ENCODE measurements at regions of chr20 and their contacts with region 1.

Region 1: GRCh38 chr20:38962044-38962927 is at the start of gene DHX35:
- DNase-seq: peak; percentile 95
- H3K4me3 Mint-ChIP-seq: peak within 1 kb of the TSS; percentile 93
- H3K27ac Mint-ChIP-seq: peak within 1 kb of the TSS; percentile 93
- H3K4me1 Mint-ChIP-seq: peaks cover 19% of the 10 kb centered on the region
- H3K27me3 Mint-ChIP-seq: no peaks in the 10 kb centered on the region
- CTCF ChIP-seq: no peak
- total RNA-seq, gene DHX35: 7.8 and 8.3 TPM in 2 replicates

Region 2: GRCh38 chr20:37243076-37243936 is 1719.0 kb before region 1 on chr20:
- CTCF ChIA-PET with region 1: no interaction called
- POLR2A ChIA-PET with region 1: no interaction called
- intact Hi-C with region 1: no loop called
- DNase-seq: no peak
- H3K4me3 Mint-ChIP-seq: no peak overlapping the region
- H3K27ac Mint-ChIP-seq: peak overlapping the region; percentile 52
- H3K4me1 Mint-ChIP-seq: no peaks in the 10 kb centered on the region
- H3K27me3 Mint-ChIP-seq: no peaks in the 10 kb centered on the region
- CTCF ChIP-seq: no peak

Region 3: DNA sequence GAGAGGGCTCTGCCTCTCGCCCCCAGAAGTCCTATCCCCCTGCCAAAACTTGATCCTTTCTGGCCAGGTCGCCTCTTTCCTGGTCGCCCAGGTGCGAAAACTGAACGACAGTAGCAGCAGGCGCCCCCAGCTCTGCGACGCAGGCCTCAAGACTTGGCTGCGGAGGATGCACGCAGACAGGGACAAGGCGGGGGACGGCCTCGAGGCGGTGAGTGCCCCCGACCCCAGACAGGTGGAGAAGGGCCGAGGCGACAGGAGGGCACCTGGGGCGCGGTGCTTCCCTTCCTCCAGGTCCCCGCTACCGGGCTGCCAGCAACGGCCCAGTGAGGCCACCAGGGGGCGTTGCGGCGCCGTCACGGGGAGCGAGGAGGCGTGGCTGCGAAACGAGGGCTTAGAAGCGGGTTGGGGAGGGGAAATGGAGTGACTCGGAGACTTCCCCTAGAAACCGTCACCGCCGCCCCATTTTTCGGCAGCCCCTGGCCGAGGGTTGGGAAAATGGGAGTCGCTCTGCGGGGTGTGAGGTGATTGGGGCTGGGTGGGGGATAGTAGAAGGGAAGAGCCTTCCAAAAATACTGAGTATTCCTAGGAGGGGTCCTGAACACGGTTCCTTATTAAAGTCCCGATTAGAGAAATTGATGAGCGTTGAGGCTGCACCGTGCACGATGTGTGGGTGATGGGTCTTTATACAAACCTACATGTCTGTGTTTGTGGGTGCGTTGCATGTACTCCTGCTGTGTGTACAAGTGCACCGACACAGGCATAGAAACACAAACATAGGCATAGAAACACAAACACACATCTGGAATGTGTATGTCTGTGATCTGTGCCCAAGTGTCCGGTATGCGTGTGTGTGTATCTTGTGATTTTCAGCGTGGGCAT is 316.1 kb before region 1 on chr20:
- CTCF ChIA-PET with region 1: interaction called, 13 read pairs
- POLR2A ChIA-PET with region 1: no interaction called
- intact Hi-C with region 1: no loop called
- DNase-seq: peak; percentile 74
- H3K4me3 Mint-ChIP-seq: peak overlapping the region; percentile 60
- H3K27ac Mint-ChIP-seq: no peak overlapping the region
- H3K4me1 Mint-ChIP-seq: peaks cover 9% of the 10 kb centered on the region
- H3K27me3 Mint-ChIP-seq: peaks cover 42% of the 10 kb centered on the region
- CTCF ChIP-seq: peak; percentile 96

Region 4: GRCh38 chr20:38805502-38805957 is 156.8 kb before region 1 on chr20 and contains the start of gene PPP1R16B:
- CTCF ChIA-PET with region 1: no interaction called
- POLR2A ChIA-PET with region 1: no interaction called
- intact Hi-C with region 1: no loop called
- DNase-seq: no peak
- H3K4me3 Mint-ChIP-seq: no peak within 1 kb of the TSS
- H3K27ac Mint-ChIP-seq: no peak within 1 kb of the TSS
- H3K4me1 Mint-ChIP-seq: no peaks in the 10 kb centered on the region
- H3K27me3 Mint-ChIP-seq: peaks cover 24% of the 10 kb centered on the region
- CTCF ChIP-seq: no peak
- total RNA-seq, gene PPP1R16B: not detected in 2 replicates

Region 5: DNA sequence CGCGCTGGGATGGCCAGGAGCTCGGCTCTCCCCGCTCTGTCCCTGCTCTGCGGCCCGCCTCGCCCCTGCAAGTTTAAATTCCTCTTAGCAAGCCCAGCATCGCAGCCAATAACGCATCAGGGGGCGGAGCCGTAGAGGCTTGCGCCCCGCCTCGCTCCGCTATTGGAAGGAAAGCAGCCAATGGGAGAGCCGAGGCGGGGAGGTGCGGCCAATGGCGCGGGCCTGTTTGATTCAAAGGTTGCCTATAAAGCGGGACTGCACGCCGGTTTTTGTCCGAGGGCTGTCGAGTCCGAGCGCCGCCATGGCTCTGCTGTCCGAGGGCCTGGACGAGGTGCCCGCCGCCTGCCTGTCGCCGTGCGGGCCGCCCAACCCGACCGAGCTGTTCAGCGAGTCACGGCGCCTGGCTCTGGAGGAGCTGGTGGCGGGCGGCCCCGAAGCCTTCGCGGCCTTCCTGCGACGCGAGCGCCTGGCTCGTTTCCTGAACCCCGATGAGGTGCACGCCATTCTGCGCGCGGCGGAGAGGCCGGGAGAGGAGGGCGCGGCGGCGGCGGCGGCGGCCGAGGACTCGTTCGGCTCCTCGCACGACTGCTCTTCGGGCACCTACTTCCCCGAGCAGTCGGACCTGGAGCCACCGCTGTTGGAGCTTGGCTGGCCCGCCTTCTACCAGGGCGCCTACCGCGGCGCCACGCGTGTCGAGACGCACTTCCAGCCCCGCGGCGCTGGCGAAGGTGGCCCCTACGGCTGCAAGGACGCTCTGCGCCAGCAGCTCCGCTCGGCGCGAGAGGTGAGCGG is 35.9 kb before region 1 on chr20 and contains the start of gene FAM83D:
- CTCF ChIA-PET with region 1: interaction called, 68 read pairs
- POLR2A ChIA-PET with region 1: interaction called, 88 read pairs
- intact Hi-C with region 1: loop called (anchors 2 kb)
- DNase-seq: peak; percentile 98
- H3K4me3 Mint-ChIP-seq: peak within 1 kb of the TSS; percentile 77
- H3K27ac Mint-ChIP-seq: no peak within 1 kb of the TSS
- H3K4me1 Mint-ChIP-seq: peaks cover 19% of the 10 kb centered on the region
- H3K27me3 Mint-ChIP-seq: no peaks in the 10 kb centered on the region
- CTCF ChIP-seq: peak; percentile 56
- total RNA-seq, gene FAM83D: 10.7 and 18.4 TPM in 2 replicates

Region 6: DNA sequence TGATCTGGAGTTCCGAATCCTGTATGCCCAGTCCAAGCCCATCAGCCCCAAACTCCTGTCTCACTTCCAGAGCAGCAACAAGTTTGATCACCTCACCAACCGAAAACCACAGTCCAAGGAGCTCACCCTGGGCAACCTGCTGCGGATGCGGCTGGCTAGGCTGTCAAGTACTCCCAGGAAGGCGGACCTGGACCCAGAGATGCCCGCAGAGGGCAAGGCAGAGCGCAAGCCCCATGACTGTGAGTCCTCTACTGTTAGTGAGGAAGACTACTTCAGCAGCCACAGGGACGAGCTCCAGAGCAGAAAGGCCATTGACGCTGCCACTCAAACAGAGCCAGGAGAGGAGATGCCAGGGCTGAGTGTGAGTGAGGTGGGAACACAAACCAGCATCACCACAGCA is 10.7 kb before region 1 on chr20:
- CTCF ChIA-PET with region 1: interaction called, 11 read pairs
- POLR2A ChIA-PET with region 1: interaction called, 9 read pairs
- intact Hi-C with region 1: no loop called
- DNase-seq: no peak
- H3K4me3 Mint-ChIP-seq: no peak overlapping the region
- H3K27ac Mint-ChIP-seq: no peak overlapping the region
- H3K4me1 Mint-ChIP-seq: no peaks in the 10 kb centered on the region
- H3K27me3 Mint-ChIP-seq: no peaks in the 10 kb centered on the region
- CTCF ChIP-seq: no peak

Region 7: GRCh38 chr20:38979842-38980241 is 17.6 kb after region 1 on chr20:
- CTCF ChIA-PET with region 1: interaction called, 6 read pairs
- POLR2A ChIA-PET with region 1: interaction called, 17 read pairs
- intact Hi-C with region 1: no loop called
- DNase-seq: no peak
- H3K4me3 Mint-ChIP-seq: no peak overlapping the region
- H3K27ac Mint-ChIP-seq: no peak overlapping the region
- H3K4me1 Mint-ChIP-seq: peaks cover 5% of the 10 kb centered on the region
- H3K27me3 Mint-ChIP-seq: no peaks in the 10 kb centered on the region
- CTCF ChIP-seq: no peak

Region 8: DNA sequence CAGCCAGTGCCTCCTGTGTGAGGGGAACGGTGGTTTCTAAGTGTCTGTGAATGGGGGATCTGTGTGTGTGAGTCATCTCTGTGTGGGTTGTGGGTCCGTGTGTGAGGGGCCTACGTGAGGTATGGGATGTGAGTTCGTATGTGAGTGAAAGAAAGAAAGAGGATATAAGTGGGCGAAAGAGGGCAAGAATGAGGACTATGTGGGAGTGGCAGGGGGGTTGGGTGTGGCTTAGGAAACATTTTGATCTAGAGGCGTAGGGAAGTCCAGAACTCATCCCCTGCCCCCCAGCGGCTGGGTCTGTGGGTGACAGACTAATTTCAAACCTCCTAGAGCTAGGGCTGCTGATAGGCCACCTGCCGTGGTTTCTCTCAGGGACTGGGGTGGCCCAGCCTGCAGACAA is 35.3 kb after region 1 on chr20:
- CTCF ChIA-PET with region 1: interaction called, 15 read pairs
- POLR2A ChIA-PET with region 1: interaction called, 8 read pairs
- intact Hi-C with region 1: no loop called
- DNase-seq: no peak
- H3K4me3 Mint-ChIP-seq: no peak overlapping the region
- H3K27ac Mint-ChIP-seq: no peak overlapping the region
- H3K4me1 Mint-ChIP-seq: peaks cover 5% of the 10 kb centered on the region
- H3K27me3 Mint-ChIP-seq: no peaks in the 10 kb centered on the region
- CTCF ChIP-seq: no peak

Region 9: DNA sequence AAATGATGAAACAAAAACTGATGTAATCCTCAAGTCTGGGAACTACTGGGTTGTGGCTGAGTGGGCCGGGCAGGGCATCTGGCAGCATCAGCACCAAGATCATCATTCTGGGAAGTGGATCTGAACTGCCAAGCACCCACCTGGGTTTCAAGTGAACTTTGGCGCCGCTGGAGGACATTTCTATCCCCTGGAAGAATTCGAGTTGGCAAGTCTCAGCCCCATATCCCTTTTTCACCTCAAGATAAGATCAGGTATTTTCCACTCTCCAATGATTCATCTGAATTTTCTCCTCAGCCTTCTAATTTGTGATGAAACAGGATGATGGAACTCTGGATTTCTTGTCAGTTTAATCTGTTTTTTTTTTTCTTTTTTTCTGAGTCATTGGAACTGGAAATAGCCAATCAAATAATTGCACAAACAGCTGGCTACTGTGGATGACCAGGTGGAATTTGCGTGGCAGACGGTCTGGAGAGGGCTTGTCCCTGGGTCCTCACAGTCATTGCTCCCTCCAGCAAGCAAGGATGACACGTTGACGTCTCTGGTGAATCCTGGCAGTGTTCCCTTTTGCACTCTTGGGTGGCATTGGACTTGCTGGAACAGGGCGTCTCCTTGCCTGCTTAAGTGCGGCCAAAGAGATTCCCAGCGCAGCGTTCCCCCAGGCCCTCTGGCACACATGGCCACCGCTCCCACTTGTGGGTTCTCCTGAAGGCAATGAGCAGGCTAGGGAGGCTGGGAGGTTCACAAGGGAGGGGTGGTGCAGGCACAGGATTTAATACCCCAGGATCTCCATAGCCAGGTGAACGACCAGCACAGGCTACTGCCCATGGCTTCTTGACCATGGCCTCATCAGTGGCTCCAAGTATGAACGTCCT is 80.2 kb after region 1 on chr20:
- CTCF ChIA-PET with region 1: interaction called, 83 read pairs
- POLR2A ChIA-PET with region 1: interaction called, 8 read pairs
- intact Hi-C with region 1: no loop called
- DNase-seq: peak; percentile 81
- H3K4me3 Mint-ChIP-seq: peak overlapping the region; percentile 17
- H3K27ac Mint-ChIP-seq: peak overlapping the region; percentile 87
- H3K4me1 Mint-ChIP-seq: peaks cover 16% of the 10 kb centered on the region
- H3K27me3 Mint-ChIP-seq: no peaks in the 10 kb centered on the region
- CTCF ChIP-seq: no peak

Measured in MCF 10A (cell line).